Heart left ventricle (tissue), 16 donors: ENCODE measurements at regions of chr5 and their contacts with region 1.

Region 1: GRCh38 chr5:114305402-114306211 is 56.3 kb upstream of the KCNN2 start:
- DNase-seq: no peak
- ATAC-seq: peak in 2 of 4 donors; percentile 28 to 50
- H3K4me3 ChIP-seq: no peak overlapping the region
- H3K27ac ChIP-seq: no peak overlapping the region
- H3K4me1 ChIP-seq: no peaks in the 10 kb centered on the region
- H3K27me3 ChIP-seq: no peaks in the 10 kb centered on the region
- CTCF ChIP-seq: peak; percentile 16 to 64 (median 42)
- POLR2A ChIP-seq: no peak

Region 2: GRCh38 chr5:114018186-114018585 is 287.4 kb before region 1 on chr5:
- intact Hi-C with region 1: loop called in 6 of 10 experiments (anchors 2 to 10 kb)
- DNase-seq: no peak
- ATAC-seq: peak in 3 of 4 donors; percentile 54 to 58 (median 55)
- H3K4me3 ChIP-seq: no peak overlapping the region
- H3K27ac ChIP-seq: no peak overlapping the region
- H3K4me1 ChIP-seq: no peaks in the 10 kb centered on the region
- H3K27me3 ChIP-seq: peaks cover 0 to 5% (median 0%) of the 10 kb centered on the region in 9 donors
- CTCF ChIP-seq: peak in 11 of 12 donors; percentile 3 to 66 (median 45)
- POLR2A ChIP-seq: no peak

Region 3: DNA sequence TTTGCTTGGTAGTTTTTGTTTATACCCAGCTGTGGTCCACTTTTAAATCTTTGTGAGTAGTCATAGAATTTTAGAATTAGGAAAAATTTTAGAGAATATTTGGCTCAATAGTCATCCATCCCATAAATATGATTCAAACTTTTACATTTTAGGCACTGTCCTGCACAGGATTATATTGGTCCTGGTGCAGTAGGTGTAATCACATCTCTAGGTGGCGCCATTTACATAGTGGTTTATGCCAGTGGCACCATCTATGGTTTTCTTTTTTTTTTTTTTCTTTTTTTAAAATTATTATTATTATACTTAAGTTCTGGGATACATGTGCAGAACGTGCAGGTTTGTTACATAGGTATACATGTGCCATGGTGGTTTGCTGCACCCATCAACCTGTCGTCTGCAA is 204.5 kb before region 1 on chr5:
- intact Hi-C with region 1: loop called (anchors 2 to 10 kb)
- DNase-seq: peak in 1 of 5 donors; percentile 18
- ATAC-seq: peak in 2 of 4 donors; percentile 62 to 63
- H3K4me3 ChIP-seq: no peak overlapping the region
- H3K27ac ChIP-seq: no peak overlapping the region
- H3K4me1 ChIP-seq: no peaks in the 10 kb centered on the region
- H3K27me3 ChIP-seq: no peaks in the 10 kb centered on the region
- CTCF ChIP-seq: peak; percentile 44 to 76 (median 66)
- POLR2A ChIP-seq: no peak